Naive thymus-derived CD4-positive, alpha-beta T cell (primary cell): ENCODE measurements at regions of chr14 and their contacts with region 1.

Region 1: GRCh38 chr14:68248481-68249255 is 429.1 kb downstream of the RAD51B start:
- DNase-seq: peak in 7 of 9 donors; percentile 34 to 75 (median 64)
- ATAC-seq: peak; percentile 89
- H3K4me3 ChIP-seq: no peak overlapping the region
- H3K4me3 Mint-ChIP-seq: no peak overlapping the region
- H3K27ac ChIP-seq: no peak overlapping the region
- H3K27ac Mint-ChIP-seq: peak overlapping the region in 7 of 9 donors; percentile 41 to 81 (median 64)
- H3K4me1 ChIP-seq: peaks cover 0 to 13% of the 10 kb centered on the region in 2 donors
- H3K4me1 Mint-ChIP-seq: peaks cover 14 to 52% (median 47%) of the 10 kb centered on the region in 7 donors
- H3K27me3 ChIP-seq: no peaks in the 10 kb centered on the region
- H3K27me3 Mint-ChIP-seq: no peaks in the 10 kb centered on the region

Region 2: DNA sequence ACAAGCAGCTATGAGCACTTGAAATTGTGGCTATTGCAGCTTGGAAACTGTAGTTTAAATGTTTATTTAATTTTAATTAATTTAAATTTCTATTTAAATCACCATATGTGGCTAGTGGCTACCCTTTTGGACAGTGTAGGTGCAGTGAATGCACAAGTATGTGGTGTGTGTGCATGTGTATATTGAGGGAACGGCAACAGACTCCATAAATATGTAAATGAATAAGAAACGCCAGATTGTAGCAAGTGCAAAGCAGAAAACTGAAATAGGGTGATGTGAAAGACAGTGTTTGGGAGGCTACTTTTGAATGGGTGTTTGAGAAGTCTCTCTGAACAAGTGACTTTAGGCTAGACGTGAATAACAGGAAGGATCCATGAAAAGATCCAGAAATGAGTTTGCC is 1795.2 kb before region 1 on chr14:
- CTCF ChIA-PET with region 1: no interaction called
- POLR2A ChIA-PET with region 1: no interaction called
- intact Hi-C with region 1: no loop called
- DNase-seq: no peak
- ATAC-seq: no peak
- H3K4me3 ChIP-seq: no peak overlapping the region
- H3K4me3 Mint-ChIP-seq: no peak overlapping the region
- H3K27ac ChIP-seq: no peak overlapping the region
- H3K27ac Mint-ChIP-seq: no peak overlapping the region
- H3K4me1 ChIP-seq: no peaks in the 10 kb centered on the region
- H3K4me1 Mint-ChIP-seq: no peaks in the 10 kb centered on the region
- H3K27me3 ChIP-seq: no peaks in the 10 kb centered on the region
- H3K27me3 Mint-ChIP-seq: peaks cover 0 to 3% (median 0%) of the 10 kb centered on the region in 5 donors

Region 3: DNA sequence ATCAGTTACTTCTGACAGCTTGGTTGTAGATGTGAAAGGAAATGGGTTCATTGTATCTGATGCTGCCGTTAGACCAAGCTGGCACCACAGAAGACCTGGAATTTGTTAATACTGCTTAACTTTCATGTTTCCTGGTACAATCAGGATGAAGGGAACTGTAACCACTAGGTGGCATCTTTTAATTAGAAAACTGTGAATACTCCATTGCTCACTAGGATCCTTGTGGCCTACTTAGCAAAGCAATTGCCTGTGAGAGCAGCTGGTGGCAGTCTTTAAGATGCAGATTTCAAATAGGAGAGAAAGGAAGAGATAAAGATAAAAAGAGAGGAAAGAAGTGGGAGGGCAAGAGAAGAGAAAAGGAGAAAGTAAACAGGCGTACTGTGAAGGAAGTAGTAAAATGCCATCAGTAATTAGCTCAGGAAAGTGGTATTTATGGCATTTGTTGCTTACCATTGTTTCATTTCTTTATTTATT is 314.6 kb before region 1 on chr14:
- CTCF ChIA-PET with region 1: interaction called, 6 read pairs
- POLR2A ChIA-PET with region 1: interaction called, 7 read pairs
- intact Hi-C with region 1: loop called in 1 of 2 experiments (anchors 2 kb)
- DNase-seq: peak in 7 of 9 donors; percentile 24 to 64 (median 43)
- ATAC-seq: peak; percentile 80
- H3K4me3 ChIP-seq: no peak overlapping the region
- H3K4me3 Mint-ChIP-seq: peak overlapping the region in 2 of 10 donors; percentile 15 to 28
- H3K27ac ChIP-seq: peak overlapping the region; percentile 10
- H3K27ac Mint-ChIP-seq: peak overlapping the region in 7 of 9 donors; percentile 2 to 70 (median 56)
- H3K4me1 ChIP-seq: no peaks in the 10 kb centered on the region
- H3K4me1 Mint-ChIP-seq: peaks cover 3 to 11% (median 9%) of the 10 kb centered on the region in 7 donors
- H3K27me3 ChIP-seq: no peaks in the 10 kb centered on the region
- H3K27me3 Mint-ChIP-seq: no peaks in the 10 kb centered on the region

Region 4: GRCh38 chr14:68274725-68275124 is 26.1 kb after region 1 on chr14:
- CTCF ChIA-PET with region 1: interaction called, 11 read pairs
- POLR2A ChIA-PET with region 1: no interaction called
- intact Hi-C with region 1: no loop called
- DNase-seq: no peak
- ATAC-seq: no peak
- H3K4me3 ChIP-seq: no peak overlapping the region
- H3K4me3 Mint-ChIP-seq: peak overlapping the region in 4 of 10 donors; percentile 7 to 55 (median 41)
- H3K27ac ChIP-seq: no peak overlapping the region
- H3K27ac Mint-ChIP-seq: peak overlapping the region in 4 of 9 donors; percentile 48 to 66 (median 56)
- H3K4me1 ChIP-seq: peaks cover 0 to 31% of the 10 kb centered on the region in 2 donors
- H3K4me1 Mint-ChIP-seq: peaks cover 26 to 82% (median 64%) of the 10 kb centered on the region in 7 donors
- H3K27me3 ChIP-seq: no peaks in the 10 kb centered on the region
- H3K27me3 Mint-ChIP-seq: no peaks in the 10 kb centered on the region

Region 5: DNA sequence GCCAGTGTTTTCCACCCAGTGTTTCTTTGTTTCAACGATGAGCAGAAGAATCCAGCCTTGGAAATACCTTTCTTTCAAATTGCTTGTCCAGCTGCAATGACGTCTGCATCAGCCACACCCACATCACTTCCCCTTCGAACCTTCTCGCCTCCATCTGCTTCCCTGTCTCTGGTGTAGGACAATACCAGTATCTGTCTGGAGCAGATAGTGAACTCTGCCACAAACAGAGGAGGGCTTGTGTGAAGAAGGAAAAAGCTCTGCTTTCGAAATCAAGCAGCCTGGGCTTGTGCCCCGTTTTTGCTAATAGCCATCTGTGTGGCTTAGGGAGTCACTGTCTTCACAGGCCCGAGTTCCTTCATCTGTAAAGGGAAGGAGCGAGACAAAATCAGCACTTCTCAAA is 128.8 kb after region 1 on chr14:
- CTCF ChIA-PET with region 1: interaction called, 14 read pairs
- POLR2A ChIA-PET with region 1: interaction called, 3 read pairs
- intact Hi-C with region 1: no loop called
- DNase-seq: no peak
- ATAC-seq: peak; percentile 62
- H3K4me3 ChIP-seq: no peak overlapping the region
- H3K4me3 Mint-ChIP-seq: peak overlapping the region in 7 of 10 donors; percentile 29 to 72 (median 59)
- H3K27ac ChIP-seq: peak overlapping the region; percentile 37
- H3K27ac Mint-ChIP-seq: peak overlapping the region in 7 of 9 donors; percentile 69 to 89 (median 81)
- H3K4me1 ChIP-seq: peaks cover 0 to 38% of the 10 kb centered on the region in 2 donors
- H3K4me1 Mint-ChIP-seq: peaks cover 30 to 84% (median 72%) of the 10 kb centered on the region in 7 donors
- H3K27me3 ChIP-seq: no peaks in the 10 kb centered on the region
- H3K27me3 Mint-ChIP-seq: no peaks in the 10 kb centered on the region

Region 6: GRCh38 chr14:68685419-68686204 is 436.9 kb after region 1 on chr14:
- CTCF ChIA-PET with region 1: interaction called, 8 read pairs
- POLR2A ChIA-PET with region 1: interaction called, 5 read pairs
- intact Hi-C with region 1: loop called (anchors 2 to 10 kb)
- DNase-seq: peak; percentile 31 to 74 (median 64)
- ATAC-seq: peak; percentile 91
- H3K4me3 ChIP-seq: no peak overlapping the region
- H3K4me3 Mint-ChIP-seq: peak overlapping the region; percentile 3 to 74 (median 48)
- H3K27ac ChIP-seq: peak overlapping the region; percentile 25
- H3K27ac Mint-ChIP-seq: peak overlapping the region; percentile 74 to 97 (median 91)
- H3K4me1 ChIP-seq: peaks cover 44 to 53% of the 10 kb centered on the region in 2 donors
- H3K4me1 Mint-ChIP-seq: peaks cover 52 to 74% (median 59%) of the 10 kb centered on the region in 7 donors
- H3K27me3 ChIP-seq: no peaks in the 10 kb centered on the region
- H3K27me3 Mint-ChIP-seq: no peaks in the 10 kb centered on the region

Region 7: DNA sequence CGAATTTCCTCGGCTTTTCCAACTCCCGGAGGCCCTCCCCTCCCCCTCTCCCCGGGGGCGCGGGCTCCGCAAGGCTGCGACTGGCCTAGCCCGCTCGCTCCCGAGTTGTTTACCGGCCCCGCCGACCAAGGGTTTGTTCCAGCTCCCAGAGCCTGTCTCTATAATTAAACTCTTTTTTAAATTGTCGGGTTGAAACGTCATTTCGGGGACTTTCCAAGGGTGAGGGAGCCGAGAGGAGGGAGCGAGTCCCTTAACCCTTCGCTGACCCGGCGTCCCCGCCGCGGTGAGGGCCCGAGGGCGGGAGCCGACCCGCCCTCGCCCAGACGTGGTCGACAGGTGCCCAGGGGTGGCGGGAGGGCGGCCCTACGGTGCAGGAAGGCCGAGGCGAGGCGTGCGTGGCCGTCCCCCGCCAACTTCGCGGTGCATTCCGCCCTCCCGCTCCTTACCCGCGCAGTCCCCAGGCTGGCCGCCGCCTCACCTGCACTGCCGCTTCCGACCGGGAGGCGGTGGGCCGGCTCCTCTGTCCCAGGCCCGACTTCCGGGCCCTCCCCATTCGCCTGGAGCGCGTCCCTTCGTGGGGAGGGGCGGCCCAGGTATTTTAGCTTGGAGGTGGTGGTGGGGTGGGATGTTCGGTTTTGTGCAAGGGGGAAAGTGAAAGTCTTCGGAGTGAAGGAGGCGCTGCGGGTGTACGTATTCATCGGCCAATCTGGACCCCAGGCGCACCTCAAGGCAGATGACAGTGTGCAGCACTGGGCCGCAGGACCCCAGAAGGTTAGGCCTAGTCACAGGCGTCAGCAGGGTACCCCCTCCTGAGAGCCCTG is 547.1 kb after region 1 on chr14:
- CTCF ChIA-PET with region 1: interaction called, 219 read pairs
- POLR2A ChIA-PET with region 1: interaction called, 203 read pairs
- intact Hi-C with region 1: no loop called
- DNase-seq: peak; percentile 77 to 92 (median 86)
- ATAC-seq: peak; percentile 56
- H3K4me3 ChIP-seq: peak overlapping the region; percentile 91
- H3K4me3 Mint-ChIP-seq: peak overlapping the region; percentile 92 to 99 (median 95)
- H3K27ac ChIP-seq: peak overlapping the region; percentile 100
- H3K27ac Mint-ChIP-seq: peak overlapping the region; percentile 91 to 100 (median 98)
- H3K4me1 ChIP-seq: peaks cover 11 to 18% of the 10 kb centered on the region in 2 donors
- H3K4me1 Mint-ChIP-seq: peaks cover 9 to 37% (median 31%) of the 10 kb centered on the region in 7 donors
- H3K27me3 ChIP-seq: no peaks in the 10 kb centered on the region
- H3K27me3 Mint-ChIP-seq: peaks cover 0 to 4% (median 0%) of the 10 kb centered on the region in 5 donors

Region 8: GRCh38 chr14:69107407-69108003 is 858.8 kb after region 1 on chr14:
- CTCF ChIA-PET with region 1: no interaction called
- POLR2A ChIA-PET with region 1: no interaction called
- intact Hi-C with region 1: loop called in 1 of 2 experiments (anchors 10 kb)
- DNase-seq: peak in 7 of 9 donors; percentile 31 to 59 (median 47)
- ATAC-seq: peak; percentile 67
- H3K4me3 ChIP-seq: no peak overlapping the region
- H3K4me3 Mint-ChIP-seq: no peak overlapping the region
- H3K27ac ChIP-seq: no peak overlapping the region
- H3K27ac Mint-ChIP-seq: peak overlapping the region in 1 of 9 donors; percentile 29
- H3K4me1 ChIP-seq: no peaks in the 10 kb centered on the region
- H3K4me1 Mint-ChIP-seq: peaks cover 2 to 18% (median 6%) of the 10 kb centered on the region in 7 donors
- H3K27me3 ChIP-seq: no peaks in the 10 kb centered on the region
- H3K27me3 Mint-ChIP-seq: no peaks in the 10 kb centered on the region